Activated CD8-positive, alpha-beta T cell treated with anti-CD3 and anti-CD28 coated beads for 36 hours (primary cell): ENCODE measurements at regions of chr13 and their contacts with region 1.

Region 1: DNA sequence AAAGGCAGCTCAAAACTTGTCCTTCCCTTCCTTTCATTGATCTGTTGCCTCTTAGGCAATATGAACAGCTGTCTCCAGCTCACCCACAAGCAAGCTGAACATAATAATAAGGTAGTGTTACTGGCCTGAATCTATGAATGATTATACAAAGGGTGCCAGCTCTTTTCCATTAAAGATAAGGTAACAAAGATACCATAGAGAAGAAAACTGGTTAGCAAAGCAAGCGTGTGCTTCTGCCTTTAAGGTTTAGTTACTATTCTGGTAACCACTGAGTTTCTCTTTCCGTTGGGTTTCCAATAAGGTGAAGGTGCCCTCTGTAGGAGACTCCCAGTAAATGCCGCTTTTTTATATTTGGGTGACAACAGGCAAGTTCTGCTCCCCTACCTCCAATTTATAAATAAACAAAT is 12.1 kb upstream of the DACH1 start:
- DNase-seq: peak; percentile 5
- ATAC-seq: peak; percentile 62
- H3K4me3 Mint-ChIP-seq: no peak overlapping the region
- H3K27ac Mint-ChIP-seq: no peak overlapping the region
- H3K4me1 Mint-ChIP-seq: no peaks in the 10 kb centered on the region
- H3K27me3 Mint-ChIP-seq: no peaks in the 10 kb centered on the region
- CTCF ChIP-seq: peak; percentile 47

Region 2: GRCh38 chr13:71115301-71115700 is 763.8 kb before region 1 on chr13:
- CTCF ChIA-PET with region 1: no interaction called
- POLR2A ChIA-PET with region 1: no interaction called
- intact Hi-C with region 1: no loop called
- DNase-seq: no peak
- ATAC-seq: no peak
- H3K4me3 Mint-ChIP-seq: no peak overlapping the region
- H3K27ac Mint-ChIP-seq: no peak overlapping the region
- H3K4me1 Mint-ChIP-seq: no peaks in the 10 kb centered on the region
- H3K27me3 Mint-ChIP-seq: no peaks in the 10 kb centered on the region
- CTCF ChIP-seq: no peak

Region 3: GRCh38 chr13:71867131-71867814 is 11.9 kb before region 1 on chr13 and contains the start of gene DACH1:
- CTCF ChIA-PET with region 1: interaction called, 10 read pairs
- POLR2A ChIA-PET with region 1: no interaction called
- intact Hi-C with region 1: no loop called
- DNase-seq: peak; percentile 41
- ATAC-seq: peak; percentile 35
- H3K4me3 Mint-ChIP-seq: peak within 1 kb of the TSS; percentile 58
- H3K27ac Mint-ChIP-seq: no peak within 1 kb of the TSS
- H3K4me1 Mint-ChIP-seq: peaks cover 20% of the 10 kb centered on the region
- H3K27me3 Mint-ChIP-seq: peaks cover 47% of the 10 kb centered on the region
- CTCF ChIP-seq: no peak
- total RNA-seq, gene DACH1: not detected

Region 4: DNA sequence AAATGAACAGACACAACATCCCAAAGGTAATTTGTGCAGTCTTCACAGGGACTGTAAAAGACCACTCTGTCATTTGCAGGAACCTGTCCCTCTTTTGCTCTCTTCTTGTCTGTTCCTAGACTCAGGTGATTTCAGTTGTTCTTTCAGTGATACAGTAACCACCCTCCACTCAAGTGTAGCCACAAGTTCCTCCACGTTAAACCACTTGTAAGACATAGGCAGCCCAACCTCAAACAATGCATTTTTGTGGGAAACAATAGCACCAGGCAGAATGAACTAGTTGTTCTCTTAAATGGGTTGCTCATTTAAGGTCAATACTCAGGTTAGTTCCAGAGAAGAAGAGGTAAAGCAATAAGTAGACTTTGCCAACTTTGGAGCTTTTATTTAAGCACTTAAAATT is 488.9 kb after region 1 on chr13:
- CTCF ChIA-PET with region 1: no interaction called
- POLR2A ChIA-PET with region 1: no interaction called
- intact Hi-C with region 1: no loop called
- DNase-seq: no peak
- ATAC-seq: no peak
- H3K4me3 Mint-ChIP-seq: no peak overlapping the region
- H3K27ac Mint-ChIP-seq: no peak overlapping the region
- H3K4me1 Mint-ChIP-seq: no peaks in the 10 kb centered on the region
- H3K27me3 Mint-ChIP-seq: no peaks in the 10 kb centered on the region
- CTCF ChIP-seq: no peak